ENCODE measurements at regions of chr14 and their contacts with region 1.

Region 1: DNA sequence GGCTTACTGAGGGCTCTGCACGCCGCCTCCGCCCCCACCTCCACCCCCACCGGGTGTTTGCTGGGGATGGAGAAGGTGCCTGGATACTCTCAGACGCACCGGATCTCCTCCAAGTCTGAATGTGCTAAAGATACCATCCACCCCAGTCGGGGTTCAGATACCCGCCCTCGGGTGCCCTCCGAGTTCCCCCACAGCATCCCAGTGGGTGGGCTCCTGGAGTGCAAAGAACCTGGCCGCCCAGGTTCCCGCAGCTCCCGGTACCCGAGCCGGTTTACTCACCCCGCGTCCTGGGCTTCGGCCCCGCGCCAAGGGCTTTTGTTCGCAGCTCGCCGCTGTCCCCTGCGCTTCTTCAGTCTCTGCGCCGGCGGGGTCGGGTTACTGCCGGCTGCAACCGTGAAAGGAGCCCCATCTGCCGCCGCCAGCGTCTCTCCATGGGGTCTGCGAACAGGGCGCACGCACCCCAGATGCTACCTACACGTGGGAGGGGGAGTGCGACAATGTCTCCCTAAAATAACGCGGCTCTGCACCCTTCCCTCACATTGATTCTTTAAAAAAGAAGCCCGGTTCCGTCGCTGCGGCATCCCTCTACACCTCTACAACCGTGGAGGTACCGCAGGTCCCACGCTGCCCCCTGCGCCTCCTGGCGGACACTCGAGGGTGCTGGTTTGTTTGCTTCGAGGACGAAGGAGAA is at the start of gene CCDC177:
- DNase-seq: peak; percentile 48 to 85 (median 74)
- ATAC-seq: peak; percentile 85
- H3K4me3 ChIP-seq: peak within 1 kb of the TSS; percentile 38 to 61
- H3K4me3 Mint-ChIP-seq: peak within 1 kb of the TSS; percentile 83
- H3K27ac ChIP-seq: no peak within 1 kb of the TSS
- H3K27ac Mint-ChIP-seq: no peak within 1 kb of the TSS
- H3K4me1 ChIP-seq: peaks cover 19% of the 10 kb centered on the region
- H3K4me1 Mint-ChIP-seq: peaks cover 12% of the 10 kb centered on the region
- H3K27me3 ChIP-seq: peaks cover 15 to 18% of the 10 kb centered on the region in 2 experiments
- H3K27me3 Mint-ChIP-seq: peaks cover 39% of the 10 kb centered on the region
- CTCF ChIP-seq: peak; percentile 96
- total RNA-seq, gene CCDC177: not detected

Region 2: DNA sequence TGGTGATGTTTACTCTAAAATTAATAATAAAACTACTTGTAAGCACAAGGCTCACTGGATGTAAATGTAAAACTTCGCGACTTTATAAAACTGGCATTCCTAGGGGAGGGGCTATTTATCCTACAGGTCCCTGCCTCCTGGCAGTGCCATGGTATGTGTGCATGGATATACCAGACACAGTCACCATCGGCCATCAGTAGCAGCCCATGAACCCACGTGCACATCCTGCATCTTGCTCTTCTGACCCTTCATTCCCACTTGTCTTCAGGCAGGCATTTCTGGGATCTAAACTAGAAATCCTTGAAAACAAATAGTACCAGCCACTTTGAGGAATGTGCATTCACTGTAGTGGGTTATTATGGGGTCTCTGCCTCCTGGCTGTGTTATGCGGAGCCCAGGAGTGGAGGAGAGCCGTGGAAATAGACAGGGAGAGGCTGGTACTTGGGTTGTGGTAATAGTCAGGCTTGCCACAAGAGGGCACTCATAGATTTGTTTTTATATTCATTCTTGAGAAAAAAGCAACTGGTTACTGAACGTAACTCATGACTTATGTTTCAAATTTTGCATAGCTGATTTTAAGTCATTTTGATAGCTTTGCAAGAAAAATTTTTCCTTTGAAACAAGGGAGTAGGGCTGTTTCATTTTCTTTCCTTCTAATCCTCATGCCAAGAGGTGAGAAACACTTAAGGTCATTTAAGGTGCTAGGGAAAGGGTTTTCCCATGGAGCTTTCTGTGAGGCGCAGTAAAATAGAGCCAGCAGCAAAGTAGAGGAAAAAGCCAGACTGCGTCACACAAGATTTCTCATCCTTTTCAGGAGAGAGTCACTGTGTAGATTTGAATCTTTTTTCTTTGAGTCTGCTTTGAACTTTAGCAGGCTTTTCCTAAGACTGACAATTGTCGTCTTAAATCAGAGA is 331.8 kb before region 1 on chr14:
- CTCF ChIA-PET with region 1: interaction called, 8 read pairs
- POLR2A ChIA-PET with region 1: no interaction called
- intact Hi-C with region 1: loop called in 1 of 2 experiments (anchors 1 kb)
- DNase-seq: peak; percentile 15 to 71 (median 47)
- ATAC-seq: peak; percentile 69
- H3K4me3 ChIP-seq: no peak overlapping the region
- H3K4me3 Mint-ChIP-seq: no peak overlapping the region
- H3K27ac ChIP-seq: no peak overlapping the region
- H3K27ac Mint-ChIP-seq: no peak overlapping the region
- H3K4me1 ChIP-seq: no peaks in the 10 kb centered on the region
- H3K4me1 Mint-ChIP-seq: peaks cover 3% of the 10 kb centered on the region
- H3K27me3 ChIP-seq: no peaks in the 10 kb centered on the region
- H3K27me3 Mint-ChIP-seq: no peaks in the 10 kb centered on the region
- CTCF ChIP-seq: peak; percentile 86

Region 3: GRCh38 chr14:69547701-69548348 is 26.6 kb before region 1 on chr14:
- CTCF ChIA-PET with region 1: interaction called, 12 read pairs
- POLR2A ChIA-PET with region 1: no interaction called
- intact Hi-C with region 1: no loop called
- DNase-seq: peak in 3 of 9 experiments; percentile 9 to 26 (median 24)
- ATAC-seq: no peak
- H3K4me3 ChIP-seq: no peak overlapping the region
- H3K4me3 Mint-ChIP-seq: no peak overlapping the region
- H3K27ac ChIP-seq: no peak overlapping the region
- H3K27ac Mint-ChIP-seq: no peak overlapping the region
- H3K4me1 ChIP-seq: no peaks in the 10 kb centered on the region
- H3K4me1 Mint-ChIP-seq: peaks cover 3% of the 10 kb centered on the region
- H3K27me3 ChIP-seq: peaks cover 3 to 6% of the 10 kb centered on the region in 2 experiments
- H3K27me3 Mint-ChIP-seq: peaks cover 57% of the 10 kb centered on the region
- CTCF ChIP-seq: peak; percentile 39

Region 4: DNA sequence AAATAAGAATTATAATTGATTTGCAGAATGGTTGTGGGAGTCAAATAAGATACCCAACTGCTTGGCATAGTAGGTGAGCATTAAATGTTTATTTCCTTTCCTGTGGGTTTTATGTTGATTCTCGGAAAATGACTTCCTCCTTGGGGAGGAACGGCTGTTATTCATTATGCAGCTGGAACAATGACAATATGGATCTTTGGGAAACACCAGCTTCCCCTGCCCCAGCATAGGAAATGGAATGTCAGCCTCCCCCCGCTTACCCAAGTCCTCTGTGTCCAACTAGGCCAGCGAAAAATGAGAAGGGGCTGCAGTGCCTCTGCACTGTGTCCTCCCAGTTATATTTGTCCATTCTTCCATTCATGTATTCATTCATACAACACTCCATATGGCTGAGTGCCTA is 12.0 kb after region 1 on chr14:
- CTCF ChIA-PET with region 1: interaction called, 57 read pairs
- POLR2A ChIA-PET with region 1: no interaction called
- intact Hi-C with region 1: no loop called
- DNase-seq: no peak
- ATAC-seq: no peak
- H3K4me3 ChIP-seq: no peak overlapping the region
- H3K4me3 Mint-ChIP-seq: no peak overlapping the region
- H3K27ac ChIP-seq: no peak overlapping the region
- H3K27ac Mint-ChIP-seq: no peak overlapping the region
- H3K4me1 ChIP-seq: no peaks in the 10 kb centered on the region
- H3K4me1 Mint-ChIP-seq: no peaks in the 10 kb centered on the region
- H3K27me3 ChIP-seq: no peaks in the 10 kb centered on the region
- H3K27me3 Mint-ChIP-seq: peaks cover 5% of the 10 kb centered on the region
- CTCF ChIP-seq: no peak

Region 5: DNA sequence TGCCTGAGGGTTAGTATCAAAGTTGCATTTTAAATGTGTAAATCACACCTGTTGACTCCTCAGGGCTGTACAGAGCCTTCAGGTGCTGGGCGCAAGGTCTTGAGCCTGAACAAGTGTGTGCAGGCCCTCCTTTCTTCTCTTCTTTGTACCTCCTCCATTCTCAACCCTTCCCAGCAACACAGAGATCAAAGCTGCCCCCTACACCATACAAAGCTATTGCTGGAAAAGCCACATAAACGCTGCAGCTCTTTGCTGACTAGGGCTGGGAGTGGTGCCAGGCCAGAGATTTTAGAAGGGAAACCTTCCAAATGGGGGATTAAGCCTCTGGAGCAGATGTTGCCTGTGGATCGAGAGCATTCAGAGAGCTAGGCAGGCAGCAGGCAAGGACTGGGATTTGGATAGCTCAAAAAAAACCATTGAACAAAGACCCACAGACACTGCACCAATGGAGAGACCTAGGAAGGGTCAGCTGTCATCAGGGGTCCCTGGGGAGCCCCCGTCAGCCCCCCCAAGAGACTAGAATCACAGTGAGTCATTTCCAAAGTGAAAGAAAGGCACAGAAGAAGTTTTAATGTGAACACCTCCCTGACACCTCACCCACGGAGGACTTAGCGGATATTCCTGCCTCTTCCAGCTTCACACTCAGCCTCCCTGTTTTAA is 18.7 kb after region 1 on chr14:
- CTCF ChIA-PET with region 1: interaction called, 11 read pairs
- POLR2A ChIA-PET with region 1: no interaction called
- intact Hi-C with region 1: no loop called
- DNase-seq: no peak
- ATAC-seq: no peak
- H3K4me3 ChIP-seq: no peak overlapping the region
- H3K4me3 Mint-ChIP-seq: no peak overlapping the region
- H3K27ac ChIP-seq: no peak overlapping the region
- H3K27ac Mint-ChIP-seq: no peak overlapping the region
- H3K4me1 ChIP-seq: no peaks in the 10 kb centered on the region
- H3K4me1 Mint-ChIP-seq: no peaks in the 10 kb centered on the region
- H3K27me3 ChIP-seq: no peaks in the 10 kb centered on the region
- H3K27me3 Mint-ChIP-seq: no peaks in the 10 kb centered on the region
- CTCF ChIP-seq: no peak

Measured in CD8-positive, alpha-beta T cell (primary cell).